HEK293T (cell line): ENCODE measurements at regions of chr12 and their contacts with region 1.

Region 1: GRCh38 chr12:54032627-54033100 is at the start of gene HOXC5:
- DNase-seq: peak; percentile 68

Region 2: DNA sequence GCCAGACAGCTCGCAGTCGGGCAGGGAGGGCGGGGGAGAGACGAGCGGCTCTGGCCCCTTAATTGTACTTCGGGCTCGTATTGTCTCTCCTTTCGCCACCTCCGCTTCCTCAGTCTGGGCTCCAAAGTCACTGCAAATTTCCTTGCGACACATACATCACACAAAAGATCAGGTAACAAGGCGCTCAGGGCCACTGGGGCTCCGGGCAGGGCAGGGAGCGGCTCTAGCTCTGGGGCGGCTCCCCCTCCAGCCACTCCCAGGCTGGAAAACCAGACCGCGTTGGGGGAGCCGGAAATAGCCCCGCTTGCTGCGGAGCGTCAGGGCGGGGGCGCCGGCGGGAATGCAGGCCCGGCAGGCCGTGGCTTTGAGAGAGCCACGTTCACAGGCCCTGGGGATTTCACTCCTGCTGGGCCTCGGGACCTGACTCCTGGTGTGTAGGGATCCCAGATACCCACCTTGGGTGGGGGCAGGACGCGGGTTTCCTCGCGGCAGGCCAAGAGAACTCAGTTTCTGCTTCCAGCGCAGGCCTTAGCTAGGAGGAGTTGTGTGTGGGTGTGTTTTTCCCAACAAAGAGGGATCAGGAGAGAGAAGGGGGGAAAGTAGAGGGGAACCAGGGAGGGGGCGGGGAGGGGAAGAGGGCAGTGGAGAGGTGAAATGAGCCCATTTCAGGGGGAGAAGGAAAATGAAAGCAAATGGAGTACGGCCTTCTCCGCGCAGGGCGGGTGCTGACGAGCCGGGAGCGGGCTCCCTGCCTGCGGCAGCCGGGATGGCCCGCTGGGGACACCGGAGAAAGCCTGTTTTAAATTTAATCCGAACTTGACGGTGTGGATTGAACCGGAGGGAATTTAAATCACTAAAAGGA is 37.1 kb before region 1 on chr12:
- CTCF ChIA-PET with region 1: interaction called, 4 read pairs
- POLR2A ChIA-PET with region 1: interaction called, 27 read pairs
- DNase-seq: no peak

Region 3: GRCh38 chr12:54053751-54054741 is 21.4 kb after region 1 on chr12 and contains the start of gene HOXC4:
- CTCF ChIA-PET with region 1: interaction called, 13 read pairs
- POLR2A ChIA-PET with region 1: interaction called, 117 read pairs
- DNase-seq: peak; percentile 64

Region 4: GRCh38 chr12:54134850-54135249 is 102.2 kb after region 1 on chr12:
- CTCF ChIA-PET with region 1: interaction called, 26 read pairs
- POLR2A ChIA-PET with region 1: interaction called, 12 read pairs
- DNase-seq: no peak